ENCODE measurements at regions of chr18 and their contacts with region 1.

Region 1: DNA sequence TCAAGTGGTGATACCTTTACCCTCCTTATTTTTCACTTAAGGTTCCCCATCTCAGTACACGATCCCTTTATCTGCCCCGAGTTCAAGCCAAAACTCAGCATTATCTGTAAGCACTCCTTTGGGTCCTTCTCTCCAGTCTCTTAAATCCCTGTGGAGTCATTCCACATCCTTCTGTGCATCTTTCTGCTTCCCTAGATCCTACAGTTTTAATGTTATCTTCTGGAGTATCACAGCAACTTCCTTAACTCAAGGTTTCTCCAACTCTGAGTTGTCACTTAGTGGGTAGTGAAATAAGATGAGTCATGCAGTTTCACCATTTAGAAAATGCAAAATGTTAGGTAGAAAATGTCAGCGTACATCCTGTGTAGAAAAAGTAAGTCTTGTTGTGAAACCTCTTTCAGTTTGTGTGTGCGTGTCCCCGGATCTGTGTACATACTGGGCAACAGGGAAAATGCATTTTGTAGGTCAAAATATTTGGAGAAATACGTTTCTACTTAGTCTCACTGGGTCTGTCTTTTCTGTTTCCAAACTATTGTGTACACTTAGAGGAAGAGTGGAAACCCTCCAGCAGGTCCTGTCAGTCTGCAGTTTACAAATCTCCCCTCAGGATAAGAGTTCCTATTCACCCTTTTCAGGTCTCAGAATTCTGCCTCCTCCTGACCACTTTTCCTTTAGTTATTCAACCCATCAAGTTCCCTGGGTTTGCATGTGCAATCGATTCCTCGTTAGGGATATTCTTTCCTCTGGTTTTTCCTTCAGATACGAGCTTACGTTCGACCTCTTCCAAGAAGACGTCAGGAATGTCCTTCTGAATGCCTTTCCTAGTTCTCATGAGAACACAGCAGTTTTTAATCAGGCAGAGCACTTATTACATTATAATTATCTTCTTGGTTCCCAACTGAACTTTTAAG is 154.8 kb downstream of the TGIF1 start:
- DNase-seq: peak; percentile 47
- CTCF ChIP-seq: no peak

Region 2: GRCh38 chr18:2656981-2657512 is 947.7 kb before region 1 on chr18:
- CTCF ChIA-PET with region 1: no interaction called
- POLR2A ChIA-PET with region 1: interaction called, 10 read pairs
- DNase-seq: no peak
- CTCF ChIP-seq: no peak